CD14-positive monocyte (primary cell): ENCODE measurements at regions of chr16 and their contacts with region 1.

Region 1: GRCh38 chr16:19737306-19738038 is 19.4 kb downstream of the IQCK start:
- DNase-seq: no peak
- H3K4me3 ChIP-seq: no peak overlapping the region
- H3K4me3 Mint-ChIP-seq: no peak overlapping the region
- H3K27ac ChIP-seq: no peak overlapping the region
- H3K27ac Mint-ChIP-seq: peak overlapping the region in 1 of 7 donors; percentile 23
- H3K4me1 ChIP-seq: peaks cover 0 to 2% of the 10 kb centered on the region in 2 donors
- H3K4me1 Mint-ChIP-seq: peaks cover 8% of the 10 kb centered on the region
- H3K27me3 ChIP-seq: no peaks in the 10 kb centered on the region
- H3K27me3 Mint-ChIP-seq: peaks cover 0 to 3% (median 0%) of the 10 kb centered on the region in 3 donors
- CTCF ChIP-seq: no peak

Region 2: DNA sequence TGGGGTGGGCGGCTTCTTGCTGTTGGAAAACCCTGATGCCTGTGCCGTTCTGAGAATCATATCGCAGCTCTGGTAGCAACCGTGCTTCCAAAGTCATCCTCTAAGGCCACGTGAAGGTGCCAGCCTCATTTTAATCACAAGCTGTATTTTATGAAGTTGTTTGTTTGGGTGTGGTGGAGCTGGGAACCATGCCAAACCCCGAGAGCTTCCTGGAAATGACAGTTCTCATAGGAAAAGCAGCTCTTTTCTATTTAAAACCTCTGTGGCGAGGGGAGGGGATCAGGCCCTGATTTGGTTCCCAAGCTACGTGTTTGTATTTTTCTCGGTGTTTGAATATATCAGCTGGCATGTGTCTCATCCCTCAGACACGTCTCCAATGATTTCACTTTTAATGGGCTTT is 41.1 kb before region 1 on chr16:
- intact Hi-C with region 1: loop called in 1 of 2 experiments (anchors 5 kb)
- DNase-seq: no peak
- H3K4me3 ChIP-seq: no peak overlapping the region
- H3K4me3 Mint-ChIP-seq: peak overlapping the region; percentile 34 to 48
- H3K27ac ChIP-seq: peak overlapping the region in 1 of 2 donors; percentile 26
- H3K27ac Mint-ChIP-seq: peak overlapping the region in 3 of 7 donors; percentile 41 to 60 (median 41)
- H3K4me1 ChIP-seq: peaks cover 12% of the 10 kb centered on the region in 2 donors
- H3K4me1 Mint-ChIP-seq: peaks cover 19% of the 10 kb centered on the region
- H3K27me3 ChIP-seq: no peaks in the 10 kb centered on the region
- H3K27me3 Mint-ChIP-seq: peaks cover 0 to 3% (median 2%) of the 10 kb centered on the region in 3 donors
- CTCF ChIP-seq: no peak